Caco-2 (cell line): ENCODE measurements at regions of chr16 and their contacts with region 1.

Region 1: DNA sequence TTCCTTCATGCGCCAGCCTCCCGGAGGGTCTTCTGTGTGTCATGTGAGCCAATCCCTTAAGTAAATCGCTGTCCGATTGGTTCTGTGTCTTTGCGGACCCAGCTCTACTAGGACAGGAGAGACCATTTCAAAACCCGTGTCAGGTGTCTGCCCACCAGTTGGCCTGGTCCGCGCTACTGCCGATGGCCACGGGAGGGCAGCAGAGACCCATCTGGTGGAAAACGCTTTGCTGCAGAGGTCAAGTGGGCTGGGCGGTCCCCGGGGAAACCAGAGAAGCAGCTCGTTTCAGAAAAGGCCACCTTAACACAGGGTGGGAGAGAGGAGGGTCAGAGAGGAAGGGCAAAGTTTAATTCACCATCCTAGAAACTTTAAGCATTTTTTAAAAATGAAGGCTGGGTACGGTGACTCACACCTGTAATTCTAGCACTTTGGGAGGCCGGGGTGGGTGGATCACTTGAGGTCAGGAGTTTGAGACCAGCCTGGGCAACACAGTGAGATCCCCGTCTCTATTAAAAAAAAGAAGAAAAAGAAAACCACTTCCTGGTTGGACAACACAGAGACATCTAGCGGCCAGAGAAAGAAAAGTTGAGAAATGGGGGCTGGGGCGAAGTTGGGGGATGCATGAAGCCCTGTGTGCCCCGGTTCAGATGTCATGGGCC is 2.8 kb upstream of the CIBAR2 start:
- DNase-seq: peak; percentile 92 to 97
- H3K4me3 ChIP-seq: no peak overlapping the region
- H3K4me3 Mint-ChIP-seq: peak overlapping the region; percentile 62
- H3K27ac Mint-ChIP-seq: peak overlapping the region; percentile 89
- H3K4me1 ChIP-seq: no peaks in the 10 kb centered on the region; the same call in 1 of the 2 replicates
- H3K4me1 Mint-ChIP-seq: peaks cover 7% of the 10 kb centered on the region
- H3K27me3 ChIP-seq: no peaks in the 10 kb centered on the region
- H3K27me3 Mint-ChIP-seq: no peaks in the 10 kb centered on the region
- CTCF ChIP-seq: peak; percentile 98 to 99

Region 2: GRCh38 chr16:85172455-85173145 is 57.6 kb after region 1 on chr16:
- CTCF ChIA-PET with region 1: no interaction called
- POLR2A ChIA-PET with region 1: no interaction called
- intact Hi-C with region 1: loop called (anchors 1 kb)
- DNase-seq: peak in 1 of 2 experiments; percentile 49
- H3K4me3 ChIP-seq: no peak overlapping the region
- H3K4me3 Mint-ChIP-seq: peak overlapping the region; percentile 64
- H3K27ac Mint-ChIP-seq: peak overlapping the region; percentile 6
- H3K4me1 ChIP-seq: peaks cover 52% of the 10 kb centered on the region
- H3K4me1 Mint-ChIP-seq: peaks cover 37% of the 10 kb centered on the region
- H3K27me3 ChIP-seq: no peaks in the 10 kb centered on the region
- H3K27me3 Mint-ChIP-seq: no peaks in the 10 kb centered on the region
- CTCF ChIP-seq: peak in 1 of 2 experiments; percentile 42

Region 3: DNA sequence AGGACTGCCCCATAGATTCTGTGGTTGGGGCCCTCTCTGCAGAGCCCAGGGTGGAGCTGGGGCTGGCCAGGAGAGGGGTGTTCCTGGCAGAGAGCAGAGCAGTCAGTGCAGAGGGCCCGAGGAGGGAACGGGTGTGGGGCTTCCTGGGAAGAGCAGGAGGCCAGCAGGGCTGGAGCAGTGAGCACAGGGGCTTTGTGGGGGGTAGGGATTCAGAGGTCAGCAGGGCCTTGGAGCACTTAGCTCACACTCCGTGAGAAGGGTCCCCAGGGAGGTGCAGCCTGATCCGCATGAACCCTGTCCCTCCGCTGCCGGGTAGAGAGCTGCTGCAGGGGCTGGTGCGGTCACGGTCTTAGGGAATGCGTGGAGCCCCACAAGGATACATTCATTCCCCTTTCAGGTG is 110.2 kb after region 1 on chr16:
- CTCF ChIA-PET with region 1: no interaction called
- POLR2A ChIA-PET with region 1: no interaction called
- intact Hi-C with region 1: no loop called
- DNase-seq: no peak
- H3K4me3 ChIP-seq: no peak overlapping the region
- H3K4me3 Mint-ChIP-seq: no peak overlapping the region
- H3K27ac Mint-ChIP-seq: no peak overlapping the region
- H3K4me1 ChIP-seq: no peaks in the 10 kb centered on the region
- H3K4me1 Mint-ChIP-seq: peaks cover 6% of the 10 kb centered on the region
- H3K27me3 ChIP-seq: no peaks in the 10 kb centered on the region
- H3K27me3 Mint-ChIP-seq: no peaks in the 10 kb centered on the region
- CTCF ChIP-seq: no peak

Region 4: GRCh38 chr16:85245307-85246172 is 130.5 kb after region 1 on chr16:
- CTCF ChIA-PET with region 1: interaction called, 7 read pairs
- POLR2A ChIA-PET with region 1: no interaction called
- intact Hi-C with region 1: loop called (anchors 1 kb)
- DNase-seq: peak; percentile 82 to 83
- H3K4me3 ChIP-seq: no peak overlapping the region
- H3K4me3 Mint-ChIP-seq: no peak overlapping the region
- H3K27ac Mint-ChIP-seq: no peak overlapping the region
- H3K4me1 ChIP-seq: no peaks in the 10 kb centered on the region
- H3K4me1 Mint-ChIP-seq: peaks cover 7% of the 10 kb centered on the region
- H3K27me3 ChIP-seq: no peaks in the 10 kb centered on the region
- H3K27me3 Mint-ChIP-seq: no peaks in the 10 kb centered on the region
- CTCF ChIP-seq: peak; percentile 92 to 95

Region 5: GRCh38 chr16:85253084-85253941 is 138.3 kb after region 1 on chr16:
- CTCF ChIA-PET with region 1: interaction called, 18 read pairs
- POLR2A ChIA-PET with region 1: no interaction called
- intact Hi-C with region 1: loop called (anchors 1 kb)
- DNase-seq: peak in 1 of 2 experiments; percentile 78
- H3K4me3 ChIP-seq: no peak overlapping the region
- H3K4me3 Mint-ChIP-seq: no peak overlapping the region
- H3K27ac Mint-ChIP-seq: no peak overlapping the region
- H3K4me1 ChIP-seq: no peaks in the 10 kb centered on the region
- H3K4me1 Mint-ChIP-seq: no peaks in the 10 kb centered on the region
- H3K27me3 ChIP-seq: no peaks in the 10 kb centered on the region
- H3K27me3 Mint-ChIP-seq: no peaks in the 10 kb centered on the region
- CTCF ChIP-seq: peak; percentile 92 to 93

Region 6: DNA sequence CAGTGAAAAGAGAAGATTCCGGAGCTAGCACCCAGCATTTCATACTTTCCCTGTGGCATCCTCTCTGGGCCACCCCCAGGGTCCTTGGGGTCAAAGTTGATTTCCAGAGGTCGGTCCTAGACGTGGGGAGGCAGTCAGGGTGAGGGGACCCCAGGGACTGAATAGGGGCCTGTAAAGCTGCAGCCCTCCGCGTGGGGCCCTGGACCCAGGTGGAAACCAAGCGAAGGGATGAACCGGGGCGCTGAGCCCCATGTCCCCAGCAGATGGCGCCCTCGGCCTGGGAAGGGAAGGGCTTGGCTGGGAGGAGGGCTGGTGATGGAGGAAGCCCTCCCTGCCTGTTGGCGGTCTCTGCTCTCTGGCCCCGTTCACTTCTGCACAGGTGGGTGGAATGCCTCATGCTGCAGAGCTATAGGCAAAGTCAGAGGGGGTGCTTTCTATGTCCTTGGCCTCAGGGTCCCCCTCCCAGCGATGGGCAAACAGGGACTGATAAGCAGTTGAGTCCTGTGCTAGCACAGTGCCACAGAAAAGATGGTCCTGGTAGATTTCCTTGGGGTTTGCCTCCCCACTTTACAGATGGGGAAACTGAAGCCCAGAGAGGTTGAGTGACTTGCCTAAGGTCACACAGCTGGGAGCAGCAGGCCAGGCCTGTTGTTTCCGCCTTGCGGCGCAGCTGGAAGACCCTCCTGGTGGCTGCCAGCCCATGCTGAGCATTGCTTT is 160.7 kb after region 1 on chr16:
- CTCF ChIA-PET with region 1: interaction called, 5 read pairs
- POLR2A ChIA-PET with region 1: no interaction called
- intact Hi-C with region 1: loop called (anchors 1 kb)
- DNase-seq: peak; percentile 69 to 88
- H3K4me3 ChIP-seq: no peak overlapping the region
- H3K4me3 Mint-ChIP-seq: no peak overlapping the region
- H3K27ac Mint-ChIP-seq: no peak overlapping the region
- H3K4me1 ChIP-seq: no peaks in the 10 kb centered on the region
- H3K4me1 Mint-ChIP-seq: no peaks in the 10 kb centered on the region
- H3K27me3 ChIP-seq: no peaks in the 10 kb centered on the region
- H3K27me3 Mint-ChIP-seq: no peaks in the 10 kb centered on the region
- CTCF ChIP-seq: peak; percentile 97 to 98

Region 7: DNA sequence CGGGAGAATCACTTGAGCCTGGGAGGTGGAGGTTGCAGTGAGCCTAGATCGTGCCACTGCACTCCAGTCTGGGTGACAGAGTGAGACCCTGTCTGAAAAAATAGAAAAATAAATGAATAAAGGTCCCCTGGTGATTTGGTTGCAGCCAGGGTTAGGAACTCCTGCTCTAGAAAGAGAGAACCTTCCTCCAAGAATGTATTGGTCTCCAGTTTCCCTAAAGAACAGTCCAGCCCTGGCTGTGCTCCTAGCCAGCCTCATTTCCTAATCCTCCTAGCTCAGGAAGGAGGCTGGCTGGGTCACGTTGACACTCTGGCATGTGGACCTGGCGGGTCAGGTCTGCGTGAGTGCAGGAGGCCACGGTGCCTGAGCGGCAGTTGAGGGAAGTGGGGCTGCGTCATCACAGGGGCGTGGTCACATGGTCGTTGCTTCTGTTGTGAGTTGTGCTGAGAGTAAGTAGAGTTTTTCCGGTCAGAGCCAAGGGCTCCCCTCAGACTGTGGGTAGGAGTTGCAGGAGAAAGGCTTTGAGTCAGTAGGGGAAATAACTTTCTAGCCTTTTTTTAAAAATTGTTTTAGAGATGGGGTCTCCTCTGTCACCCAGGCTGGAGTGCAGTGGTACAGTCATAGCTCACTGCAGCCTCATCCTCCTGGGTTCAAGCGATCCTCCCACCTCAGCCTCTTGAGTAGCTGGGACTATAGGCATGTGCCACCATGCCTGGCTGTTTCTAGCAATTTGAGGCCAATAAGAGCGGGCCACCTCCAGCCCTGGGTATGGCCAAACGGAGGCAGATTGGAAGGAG is 191.2 kb after region 1 on chr16:
- CTCF ChIA-PET with region 1: interaction called, 10 read pairs
- POLR2A ChIA-PET with region 1: no interaction called
- intact Hi-C with region 1: no loop called
- DNase-seq: peak; percentile 82 to 90
- H3K4me3 ChIP-seq: no peak overlapping the region
- H3K4me3 Mint-ChIP-seq: peak overlapping the region; percentile 44
- H3K27ac Mint-ChIP-seq: peak overlapping the region; percentile 85
- H3K4me1 ChIP-seq: peaks cover 37% of the 10 kb centered on the region
- H3K4me1 Mint-ChIP-seq: peaks cover 8% of the 10 kb centered on the region
- H3K27me3 ChIP-seq: no peaks in the 10 kb centered on the region
- H3K27me3 Mint-ChIP-seq: no peaks in the 10 kb centered on the region
- CTCF ChIP-seq: no peak

Region 8: GRCh38 chr16:85330694-85331188 is 215.7 kb after region 1 on chr16:
- CTCF ChIA-PET with region 1: interaction called, 10 read pairs
- POLR2A ChIA-PET with region 1: no interaction called
- intact Hi-C with region 1: no loop called
- DNase-seq: peak; percentile 72 to 81
- H3K4me3 ChIP-seq: no peak overlapping the region
- H3K4me3 Mint-ChIP-seq: no peak overlapping the region
- H3K27ac Mint-ChIP-seq: peak overlapping the region; percentile 8
- H3K4me1 ChIP-seq: peaks cover 44% of the 10 kb centered on the region
- H3K4me1 Mint-ChIP-seq: peaks cover 39% of the 10 kb centered on the region
- H3K27me3 ChIP-seq: no peaks in the 10 kb centered on the region
- H3K27me3 Mint-ChIP-seq: no peaks in the 10 kb centered on the region
- CTCF ChIP-seq: peak; percentile 74 to 81